Body of pancreas (tissue), 4 donors: ENCODE measurements at regions of chr2 and their contacts with region 1.

Region 1: GRCh38 chr2:159124441-159124911 is 156.0 kb downstream of the TANC1 start:
- DNase-seq: peak in 3 of 4 donors; percentile 32 to 52 (median 48)
- ATAC-seq: peak; percentile 52
- H3K4me3 ChIP-seq: no peak overlapping the region
- H3K27ac ChIP-seq: peak overlapping the region in 2 of 4 donors; percentile 30 to 37
- H3K4me1 ChIP-seq: peaks cover 29% of the 10 kb centered on the region
- H3K27me3 ChIP-seq: no peaks in the 10 kb centered on the region
- CTCF ChIP-seq: no peak
- POLR2A ChIP-seq: no peak

Region 2: GRCh38 chr2:158893026-158893425 is 231.4 kb before region 1 on chr2:
- intact Hi-C with region 1: loop called (anchors 5 kb)
- DNase-seq: no peak
- ATAC-seq: no peak
- H3K4me3 ChIP-seq: no peak overlapping the region
- H3K27ac ChIP-seq: no peak overlapping the region
- H3K4me1 ChIP-seq: no peaks in the 10 kb centered on the region
- H3K27me3 ChIP-seq: no peaks in the 10 kb centered on the region
- CTCF ChIP-seq: no peak
- POLR2A ChIP-seq: no peak

Region 3: DNA sequence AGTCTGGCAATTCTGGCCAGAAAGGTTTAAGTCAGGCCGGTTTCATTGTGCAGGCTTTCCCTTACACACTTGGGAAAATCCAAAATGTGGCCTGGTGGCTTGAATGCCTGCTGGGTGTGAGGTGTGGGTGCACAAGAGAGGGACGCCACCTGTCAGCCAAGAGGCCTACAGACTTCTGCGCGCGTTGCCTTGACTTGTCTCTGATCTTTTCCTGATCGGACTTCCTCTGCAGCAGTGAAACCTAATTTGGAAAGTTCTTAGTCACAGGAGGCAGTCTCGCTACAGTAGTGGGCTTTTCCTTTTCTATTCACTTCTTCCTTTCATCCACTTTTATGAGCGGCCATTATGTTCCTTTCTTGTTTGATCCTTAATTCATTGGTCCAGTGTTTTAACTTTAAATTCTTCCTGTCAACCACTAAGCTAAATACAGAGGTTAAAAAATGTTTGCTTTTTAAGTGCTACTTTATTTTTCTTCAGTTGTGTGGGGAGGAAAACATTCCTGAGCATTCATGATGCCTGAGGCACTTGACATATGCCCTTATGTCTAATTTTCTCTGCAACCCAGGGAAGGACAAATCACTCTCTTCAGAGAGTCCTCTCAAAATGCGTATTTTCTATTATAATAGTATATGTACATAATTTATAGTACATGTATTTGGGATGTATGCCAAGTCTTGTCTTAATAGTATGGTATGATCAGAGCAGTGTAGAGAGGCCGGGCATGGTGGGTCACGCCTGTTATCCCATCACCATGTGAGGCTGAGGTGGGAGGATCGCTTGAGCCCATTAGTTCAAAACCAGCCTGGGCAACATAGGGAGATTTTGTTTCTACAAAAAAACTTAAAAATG is 33.1 kb after region 1 on chr2:
- intact Hi-C with region 1: no loop called
- DNase-seq: no peak
- ATAC-seq: no peak
- H3K4me3 ChIP-seq: no peak overlapping the region
- H3K27ac ChIP-seq: peak overlapping the region in 3 of 4 donors; percentile 60 to 82 (median 73)
- H3K4me1 ChIP-seq: peaks cover 49% of the 10 kb centered on the region
- H3K27me3 ChIP-seq: no peaks in the 10 kb centered on the region
- CTCF ChIP-seq: no peak
- POLR2A ChIP-seq: no peak

Region 4: DNA sequence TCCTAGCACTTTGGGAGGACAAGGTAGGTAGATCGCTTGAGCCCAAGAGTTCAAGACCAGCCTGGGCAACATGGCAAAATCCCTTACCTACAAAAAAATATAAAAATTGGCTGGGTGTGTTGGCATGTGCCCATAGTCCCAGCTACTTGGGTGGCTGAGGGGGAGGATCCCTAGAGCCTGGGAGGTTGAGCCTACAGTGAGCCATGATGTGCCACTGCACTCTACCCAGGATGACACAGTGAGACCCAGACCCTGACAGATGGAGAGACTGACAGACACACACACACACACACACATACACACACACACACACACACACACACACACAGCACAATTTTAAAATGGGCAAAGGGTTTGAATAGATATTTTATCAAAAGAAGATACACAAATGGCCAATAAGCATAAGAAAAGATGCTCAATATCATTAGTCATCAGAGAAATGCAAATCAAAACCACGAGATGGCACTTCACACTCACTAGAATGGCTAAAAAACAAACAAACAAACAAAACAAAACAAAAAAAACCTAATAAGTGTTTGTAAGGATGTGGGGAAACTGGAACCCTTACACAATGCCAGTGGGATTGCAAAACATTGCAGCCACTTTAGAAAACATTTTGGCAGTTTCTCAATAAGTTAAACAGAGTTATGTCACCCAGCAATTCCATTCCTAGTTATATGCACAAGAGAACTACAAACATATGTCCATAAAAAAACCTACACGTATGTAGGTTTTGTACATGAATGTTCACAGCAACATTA is 449.6 kb after region 1 on chr2:
- intact Hi-C with region 1: no loop called
- DNase-seq: peak in 1 of 4 donors; percentile 10
- ATAC-seq: no peak
- H3K4me3 ChIP-seq: no peak overlapping the region
- H3K27ac ChIP-seq: no peak overlapping the region
- H3K4me1 ChIP-seq: peaks cover 4% of the 10 kb centered on the region
- H3K27me3 ChIP-seq: no peaks in the 10 kb centered on the region
- CTCF ChIP-seq: no peak
- POLR2A ChIP-seq: no peak